ENCODE measurements at regions of chr5 and their contacts with region 1.

Region 1: DNA sequence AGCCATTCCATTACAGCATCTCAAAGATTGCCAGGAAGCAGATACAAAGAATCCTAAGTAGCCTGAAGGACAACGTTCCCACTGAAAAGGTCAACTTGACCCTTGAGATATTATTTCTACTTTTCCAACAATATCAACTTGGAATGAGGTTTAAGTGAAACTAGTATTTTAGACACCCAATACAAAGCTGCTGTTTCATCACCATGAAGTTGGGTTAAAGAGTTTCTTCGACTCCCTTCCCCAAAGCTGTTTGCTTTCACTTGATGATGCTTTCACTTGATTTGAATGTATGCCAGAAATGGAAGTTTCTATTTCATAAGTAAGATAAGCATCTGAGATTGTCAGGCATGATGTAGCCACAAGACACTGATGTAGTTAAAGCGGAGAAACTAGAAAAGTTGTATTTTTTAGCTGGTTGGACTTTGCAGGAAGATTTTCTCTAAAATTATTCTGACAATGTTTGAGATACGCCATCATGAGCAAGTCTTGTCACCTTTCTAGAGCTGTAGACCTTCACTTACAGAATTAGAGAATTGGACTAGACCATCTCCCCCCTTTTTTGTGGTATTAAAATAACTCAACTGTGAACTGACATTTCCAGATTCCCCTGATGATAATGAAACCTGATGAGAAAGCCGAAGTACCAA is 20.1 kb downstream of the MOCS2 start:
- DNase-seq: no peak
- ATAC-seq: no peak
- H3K4me3 ChIP-seq: no peak overlapping the region
- H3K27ac ChIP-seq: no peak overlapping the region
- H3K4me1 ChIP-seq: no peaks in the 10 kb centered on the region
- H3K27me3 ChIP-seq: no peaks in the 10 kb centered on the region
- CTCF ChIP-seq: no peak

Region 2: GRCh38 chr5:52956915-52957747 is 132.3 kb before region 1 on chr5:
- intact Hi-C with region 1: loop called in 1 of 3 experiments (anchors 10 kb)
- DNase-seq: no peak
- ATAC-seq: no peak
- H3K4me3 ChIP-seq: no peak overlapping the region
- H3K27ac ChIP-seq: no peak overlapping the region
- H3K4me1 ChIP-seq: no peaks in the 10 kb centered on the region
- H3K27me3 ChIP-seq: no peaks in the 10 kb centered on the region
- CTCF ChIP-seq: no peak

Region 3: DNA sequence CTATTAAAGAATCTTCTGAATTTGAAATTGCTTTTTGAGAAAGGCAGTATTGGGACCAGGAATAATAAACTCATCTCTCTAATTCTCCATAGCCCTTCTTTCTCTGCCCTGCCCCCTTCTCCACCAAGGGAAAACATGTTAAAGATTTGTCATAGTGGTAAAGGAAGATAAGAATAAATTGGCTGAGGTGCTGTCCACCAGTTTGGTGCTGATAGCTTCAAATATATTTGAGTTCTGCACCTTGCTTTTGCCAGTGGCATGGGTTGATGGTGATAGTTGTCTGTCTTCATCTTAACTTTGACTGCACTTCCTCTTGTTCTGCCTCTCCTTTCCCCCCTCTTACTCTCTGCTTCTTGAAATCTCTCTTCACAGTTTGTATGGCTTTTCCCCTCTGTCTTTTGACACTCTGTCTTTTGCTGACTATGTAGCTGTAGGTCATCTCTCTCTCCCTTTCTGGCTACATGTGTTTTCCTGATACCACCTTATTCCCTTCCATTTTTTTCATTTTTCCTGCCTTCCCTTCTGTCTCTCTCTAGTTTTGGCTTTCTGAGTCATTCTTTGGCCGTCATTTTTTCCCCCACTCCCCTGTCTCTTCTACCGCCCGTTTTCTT is 527.6 kb after region 1 on chr5:
- intact Hi-C with region 1: no loop called
- DNase-seq: no peak
- ATAC-seq: no peak
- H3K4me3 ChIP-seq: no peak overlapping the region
- H3K27ac ChIP-seq: no peak overlapping the region
- H3K4me1 ChIP-seq: no peaks in the 10 kb centered on the region
- H3K27me3 ChIP-seq: no peaks in the 10 kb centered on the region
- CTCF ChIP-seq: no peak

Measured in pancreas (tissue), 10 donors.